K562 (cell line): ENCODE measurements at regions of chr5 and their contacts with region 1.

Region 1: DNA sequence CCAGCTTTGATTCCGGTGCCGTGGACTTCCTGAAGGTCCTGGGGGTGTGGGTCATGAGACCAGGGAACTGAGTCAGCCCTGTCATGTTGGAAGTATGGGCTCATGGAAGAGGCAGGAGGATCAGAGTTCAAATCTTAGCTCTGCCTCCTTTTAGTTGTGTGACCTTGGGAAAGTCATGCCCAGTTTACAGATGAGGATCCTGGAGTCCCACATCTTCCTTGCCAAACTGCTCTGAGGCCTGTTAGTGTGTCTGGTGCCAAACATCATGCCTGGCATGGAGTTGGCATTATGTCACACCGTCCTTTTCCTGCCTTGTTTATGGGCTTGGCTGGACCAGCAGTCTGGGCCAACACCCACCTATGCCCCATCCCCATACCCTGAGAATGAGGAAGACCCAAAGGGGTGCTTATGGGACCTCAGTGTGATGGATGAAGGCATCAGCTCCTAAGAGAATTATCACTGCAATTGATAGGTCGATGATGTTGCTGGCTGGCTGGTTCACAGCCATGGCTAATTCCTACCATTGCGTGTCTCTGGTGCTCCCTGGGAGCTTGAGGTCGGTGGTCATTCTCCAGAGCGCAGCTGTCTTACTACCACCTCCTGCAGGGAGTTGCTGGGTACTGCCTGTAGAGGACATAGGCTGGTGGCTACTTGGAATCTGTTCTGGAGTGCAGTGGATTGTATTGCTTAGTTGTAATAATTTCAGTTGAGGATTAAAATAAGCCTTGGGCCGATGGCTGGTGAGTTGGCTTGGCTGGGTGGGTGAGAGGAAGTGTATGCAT is 140.5 kb upstream of the PITX1 start:
- DNase-seq: peak; percentile 68 to 79 (median 74)
- ATAC-seq: peak; percentile 90
- H3K4me3 ChIP-seq: peak overlapping the region; percentile 16; the same call in 1 of the 2 replicates
- H3K27ac ChIP-seq: peak overlapping the region; percentile 67
- H3K4me1 ChIP-seq: peaks cover 27 to 39% of the 10 kb centered on the region in 2 experiments; a peak in 4 of 5 replicates
- H3K27me3 ChIP-seq: no peaks in the 10 kb centered on the region
- CTCF ChIP-seq: peak; percentile 86 to 96 (median 92)
- EP300 ChIP-seq: no peak
- POLR2A ChIP-seq: no peak
- RAD21 ChIP-seq: peak; percentile 64 to 82

Region 2: GRCh38 chr5:134176511-134177368 is 997.8 kb before region 1 on chr5 and contains the start of gene SKP1:
- CTCF ChIA-PET with region 1: no interaction called
- POLR2A ChIA-PET with region 1: no interaction called
- in situ Hi-C with region 1: no loop called
- intact Hi-C with region 1: no loop called
- DNase-seq: peak; percentile 89 to 93 (median 90)
- ATAC-seq: peak; percentile 89
- H3K4me3 ChIP-seq: peak within 1 kb of the TSS; percentile 98
- H3K27ac ChIP-seq: peak within 1 kb of the TSS; percentile 97
- H3K4me1 ChIP-seq: peaks cover 17 to 18% of the 10 kb centered on the region in 2 experiments
- H3K27me3 ChIP-seq: no peaks in the 10 kb centered on the region
- CTCF ChIP-seq: no peak
- EP300 ChIP-seq: no peak
- POLR2A ChIP-seq: peak; percentile 99
- RAD21 ChIP-seq: no peak
- polyA plus RNA-seq, gene SKP1: 2,075 to 2,109 TPM

Region 3: DNA sequence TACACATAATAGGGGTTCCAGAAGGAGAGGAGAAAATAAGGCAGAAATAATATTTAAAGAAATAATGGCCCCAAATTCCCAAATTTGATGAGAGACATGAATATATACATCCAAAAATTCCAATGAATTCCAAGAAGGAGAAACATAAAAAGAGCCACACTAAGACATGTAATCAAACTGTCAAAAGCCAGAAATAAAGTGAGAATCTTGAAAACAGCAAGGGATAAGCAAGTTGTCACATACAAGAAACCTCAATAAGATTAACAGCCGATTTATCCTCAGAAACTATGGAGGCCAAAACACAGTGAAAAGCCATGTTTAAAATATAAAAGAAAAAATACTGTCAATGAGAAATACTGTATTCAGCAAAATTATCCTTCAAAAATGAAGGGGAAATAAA is 192.3 kb before region 1 on chr5:
- CTCF ChIA-PET with region 1: no interaction called
- POLR2A ChIA-PET with region 1: no interaction called
- in situ Hi-C with region 1: no loop called
- intact Hi-C with region 1: no loop called
- DNase-seq: no peak
- ATAC-seq: no peak
- H3K4me3 ChIP-seq: no peak overlapping the region
- H3K27ac ChIP-seq: no peak overlapping the region
- H3K4me1 ChIP-seq: no peaks in the 10 kb centered on the region
- H3K27me3 ChIP-seq: no peaks in the 10 kb centered on the region
- CTCF ChIP-seq: no peak
- EP300 ChIP-seq: no peak
- POLR2A ChIP-seq: no peak
- RAD21 ChIP-seq: no peak

Region 4: GRCh38 chr5:134994560-134995156 is 179.8 kb before region 1 on chr5:
- CTCF ChIA-PET with region 1: no interaction called
- POLR2A ChIA-PET with region 1: no interaction called
- in situ Hi-C with region 1: no loop called
- intact Hi-C with region 1: no loop called
- DNase-seq: peak in 2 of 4 experiments; percentile 16 to 17
- ATAC-seq: peak; percentile 79
- H3K4me3 ChIP-seq: no peak overlapping the region
- H3K27ac ChIP-seq: no peak overlapping the region
- H3K4me1 ChIP-seq: peaks cover 0 to 3% of the 10 kb centered on the region in 2 experiments; a peak in 1 of 5 replicates
- H3K27me3 ChIP-seq: no peaks in the 10 kb centered on the region
- CTCF ChIP-seq: no peak
- EP300 ChIP-seq: no peak
- POLR2A ChIP-seq: no peak
- RAD21 ChIP-seq: no peak

Region 5: DNA sequence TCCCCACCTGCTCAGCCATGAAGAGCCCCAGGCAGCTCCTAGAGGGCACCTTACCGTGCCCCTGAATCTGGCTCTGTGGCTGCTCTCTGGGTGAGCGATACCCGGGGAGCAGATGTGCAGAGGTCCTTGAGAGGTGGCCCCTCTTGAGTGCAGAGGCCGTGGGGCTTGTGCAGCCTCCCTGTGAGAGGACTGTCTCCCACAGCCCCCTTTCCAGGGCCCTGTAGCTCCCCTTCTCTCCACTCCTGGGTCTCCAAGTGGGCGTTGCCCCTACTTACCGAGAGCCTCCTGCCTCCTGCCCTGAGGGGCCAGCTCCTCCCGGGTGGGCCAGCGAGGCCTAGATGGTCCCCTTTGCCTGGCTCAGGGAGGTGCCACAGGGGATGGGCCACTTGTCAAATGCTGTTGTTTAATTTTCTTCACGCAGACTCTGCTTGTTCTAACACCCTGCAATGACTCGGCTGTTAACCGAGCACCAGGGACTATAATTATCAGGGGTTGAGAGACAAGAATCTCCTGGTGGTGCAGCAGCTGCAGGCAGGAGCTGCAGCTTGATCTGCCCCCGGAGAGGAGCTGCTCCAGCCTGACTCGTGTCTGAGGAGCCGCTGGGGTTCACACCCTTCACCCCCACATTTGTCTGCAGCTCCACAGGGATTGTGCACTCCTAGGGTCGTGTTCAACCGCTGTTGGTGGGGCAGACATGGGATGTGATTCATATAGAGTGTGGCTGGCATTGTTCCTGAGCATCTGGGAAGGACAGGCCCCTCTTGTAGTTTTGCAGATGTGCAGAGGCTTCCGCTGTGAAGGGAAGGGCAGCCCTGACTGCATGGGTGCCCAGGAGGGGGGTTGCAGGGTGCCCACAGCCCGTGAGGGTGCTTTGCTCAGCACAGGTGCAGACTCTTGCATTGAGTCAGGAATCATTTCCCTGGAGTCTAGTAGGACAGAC is 110.6 kb before region 1 on chr5:
- CTCF ChIA-PET with region 1: no interaction called
- POLR2A ChIA-PET with region 1: no interaction called
- in situ Hi-C with region 1: no loop called
- intact Hi-C with region 1: loop called (anchors 1 kb)
- DNase-seq: peak; percentile 30 to 43 (median 40)
- ATAC-seq: peak; percentile 54
- H3K4me3 ChIP-seq: no peak overlapping the region
- H3K27ac ChIP-seq: no peak overlapping the region
- H3K4me1 ChIP-seq: peaks cover 4 to 29% of the 10 kb centered on the region in 2 experiments; a peak in 3 of 5 replicates
- H3K27me3 ChIP-seq: 0 out of 5 replicates have a peak, but pooled peaks cover 0 to 3% of the 10 kb centered on the region in 2 experiments
- CTCF ChIP-seq: no peak
- EP300 ChIP-seq: no peak
- POLR2A ChIP-seq: no peak
- RAD21 ChIP-seq: no peak